ENCODE measurements at regions of chr18 and their contacts with region 1.

Region 1: DNA sequence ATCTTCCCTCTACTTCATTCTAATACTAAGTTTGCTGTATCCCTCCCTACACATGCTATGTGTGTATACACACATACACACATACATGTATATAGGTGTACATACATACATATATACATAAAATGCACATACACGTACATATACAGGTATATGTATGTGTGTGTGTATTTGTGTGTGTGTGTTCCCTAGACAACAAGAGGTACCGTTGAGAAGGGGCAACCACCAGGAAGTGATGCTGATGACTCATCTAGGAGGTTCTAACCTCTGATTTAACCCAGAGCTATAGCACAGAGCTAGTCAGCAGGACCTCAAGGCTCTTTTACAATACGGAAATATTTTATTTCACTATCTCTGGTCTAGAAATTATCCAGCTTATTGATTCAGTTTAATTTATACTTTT is 139.2 kb downstream of the LAMA3 start:
- DNase-seq: no peak
- ATAC-seq: peak in 1 of 2 donors; percentile 49

Region 2: DNA sequence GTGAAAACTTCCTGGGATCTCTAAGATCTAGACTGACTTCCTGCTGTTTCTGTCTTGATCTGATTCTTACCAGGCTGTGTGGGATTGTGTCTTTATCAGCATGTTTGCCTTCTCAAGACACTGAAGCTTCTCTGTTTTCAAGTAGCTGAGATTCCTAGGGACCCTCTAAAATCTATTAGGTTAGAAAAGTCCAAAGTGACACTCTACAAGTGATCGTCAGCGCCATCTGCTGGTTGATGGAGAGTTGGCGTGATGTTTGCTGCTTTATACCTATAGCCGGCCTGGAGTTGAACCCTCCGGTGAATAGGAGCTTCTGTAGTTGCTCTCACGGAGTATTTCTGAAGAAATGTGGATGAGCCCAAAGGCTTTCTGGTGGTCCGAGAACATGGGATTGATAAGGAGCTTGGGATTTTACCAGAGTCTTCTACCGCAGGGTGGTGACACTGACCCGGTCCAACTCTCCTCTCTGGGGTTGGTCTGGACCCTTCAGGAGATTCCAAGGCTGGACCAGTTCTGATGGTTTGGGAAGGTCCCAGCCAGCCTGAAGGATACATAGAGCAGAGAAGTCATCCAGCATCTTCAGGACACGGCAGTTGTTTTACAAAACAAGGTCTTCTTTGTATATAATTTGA is 90.1 kb after region 1 on chr18:
- intact Hi-C with region 1: loop called in 1 of 2 experiments (anchors 5 kb)
- DNase-seq: peak; percentile 79
- ATAC-seq: peak; percentile 71 to 79

Region 3: DNA sequence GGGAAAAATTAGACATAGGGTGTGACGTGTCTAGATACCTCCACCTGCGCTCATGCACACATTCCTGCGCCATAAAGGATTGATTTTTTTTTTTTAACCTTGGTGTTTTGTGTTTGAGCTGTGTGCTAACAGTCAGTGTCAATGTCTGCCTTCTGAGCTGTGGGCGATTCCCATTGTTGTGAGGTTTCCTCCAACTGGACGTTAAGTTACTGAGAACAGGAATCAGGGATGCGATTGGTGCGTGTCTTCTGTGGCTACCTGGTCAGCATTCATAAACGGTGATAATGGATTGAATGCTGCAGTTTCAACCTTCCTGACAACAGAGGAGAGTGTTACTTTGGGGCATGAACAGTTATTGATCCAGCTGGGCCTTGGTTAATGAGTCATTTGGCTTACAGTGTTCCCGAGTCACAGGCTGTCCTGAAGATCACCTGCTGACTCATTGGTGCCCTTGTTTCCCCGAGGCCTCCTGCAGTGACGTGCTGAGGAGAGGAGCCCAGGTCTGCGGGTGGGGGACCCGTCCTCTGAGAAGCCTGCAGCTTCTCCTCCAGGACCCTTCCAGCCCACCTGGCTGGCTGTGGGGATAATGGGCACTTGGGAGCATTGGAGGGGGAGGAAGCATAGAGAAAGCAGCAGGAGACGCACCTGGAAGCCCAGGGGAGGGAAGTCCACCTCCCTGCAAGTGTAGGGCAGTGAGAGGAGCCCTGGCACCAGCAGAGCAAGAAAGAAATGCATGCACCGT is 284.6 kb after region 1 on chr18:
- intact Hi-C with region 1: loop called in 1 of 2 experiments (anchors 5 kb)
- DNase-seq: no peak
- ATAC-seq: peak in 1 of 2 donors; percentile 33